Heart right ventricle (tissue), 16 donors: ENCODE measurements at regions of chr9 and their contacts with region 1.

Region 1: DNA sequence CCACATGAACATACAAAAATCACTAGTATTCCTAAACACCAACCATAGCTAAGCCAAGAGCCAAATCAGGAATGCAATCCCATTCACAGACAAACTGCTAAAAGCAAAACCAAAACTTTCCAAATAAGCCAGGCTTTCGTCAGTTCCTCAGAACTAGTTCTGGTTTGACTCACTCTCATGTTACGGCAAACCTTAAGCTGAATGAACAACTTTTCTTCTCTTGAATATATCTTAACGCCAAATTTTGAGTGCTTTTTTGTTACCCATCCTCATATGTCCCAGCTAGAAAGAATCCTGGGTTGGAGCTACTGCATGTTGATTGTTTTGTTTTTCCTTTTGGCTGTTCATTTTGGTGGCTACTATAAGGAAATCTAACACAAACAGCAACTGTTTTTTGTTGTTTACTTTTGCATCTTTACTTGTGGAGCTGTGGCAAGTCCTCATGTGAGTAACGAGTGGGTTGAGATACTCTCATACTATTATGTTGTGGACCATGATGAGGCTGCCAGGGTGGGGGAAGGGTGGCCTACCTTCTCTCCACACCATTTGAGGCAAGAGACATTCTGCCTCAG is at the start of gene PDCD1LG2:
- DNase-seq: no peak
- ATAC-seq: peak in 7 of 8 donors; percentile 28 to 75 (median 59)
- H3K4me3 ChIP-seq: peak within 1 kb of the TSS in 9 of 10 donors; percentile 0 to 51 (median 47)
- H3K27ac ChIP-seq: peak within 1 kb of the TSS; percentile 24 to 85 (median 74)
- H3K4me1 ChIP-seq: peaks cover 0 to 68% (median 40%) of the 10 kb centered on the region in 9 donors
- H3K27me3 ChIP-seq: no peaks in the 10 kb centered on the region
- CTCF ChIP-seq: no peak
- total RNA-seq, gene PDCD1LG2: 0.72 to 8.6 (median 1.3) TPM

Region 2: GRCh38 chr9:5140151-5140550 is 370.3 kb before region 1 on chr9:
- intact Hi-C with region 1: no loop called
- DNase-seq: no peak
- ATAC-seq: no peak
- H3K4me3 ChIP-seq: no peak overlapping the region
- H3K27ac ChIP-seq: no peak overlapping the region
- H3K4me1 ChIP-seq: no peaks in the 10 kb centered on the region
- H3K27me3 ChIP-seq: no peaks in the 10 kb centered on the region
- CTCF ChIP-seq: no peak

Region 3: DNA sequence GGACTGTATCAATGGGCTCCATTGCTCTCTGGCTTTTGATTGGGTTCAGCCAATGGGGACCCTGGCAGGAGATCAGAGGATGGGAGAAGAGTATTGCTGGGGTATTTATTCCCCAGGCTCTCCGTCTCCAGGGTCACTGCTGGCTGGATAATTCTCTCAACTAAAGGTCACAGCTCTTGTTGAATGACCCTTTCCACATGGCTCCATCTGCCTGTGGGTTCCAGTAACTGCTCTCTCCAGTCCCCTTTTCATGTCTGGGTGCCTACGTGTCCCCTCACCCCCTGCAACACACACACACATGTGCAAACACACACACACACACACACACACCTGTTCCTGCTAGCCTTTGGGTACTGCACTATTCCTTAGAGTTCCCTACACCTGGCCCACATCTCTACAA is 64.6 kb after region 1 on chr9:
- intact Hi-C with region 1: loop called in 1 of 10 experiments (anchors 10 kb)
- DNase-seq: no peak
- ATAC-seq: peak in 3 of 8 donors; percentile 22 to 62 (median 31)
- H3K4me3 ChIP-seq: no peak overlapping the region
- H3K27ac ChIP-seq: no peak overlapping the region
- H3K4me1 ChIP-seq: peaks cover 0 to 16% (median 12%) of the 10 kb centered on the region in 9 donors
- H3K27me3 ChIP-seq: no peaks in the 10 kb centered on the region
- CTCF ChIP-seq: peak in 1 of 9 donors; percentile 12